ENCODE measurements at regions of chr9 and their contacts with region 1.

Region 1: DNA sequence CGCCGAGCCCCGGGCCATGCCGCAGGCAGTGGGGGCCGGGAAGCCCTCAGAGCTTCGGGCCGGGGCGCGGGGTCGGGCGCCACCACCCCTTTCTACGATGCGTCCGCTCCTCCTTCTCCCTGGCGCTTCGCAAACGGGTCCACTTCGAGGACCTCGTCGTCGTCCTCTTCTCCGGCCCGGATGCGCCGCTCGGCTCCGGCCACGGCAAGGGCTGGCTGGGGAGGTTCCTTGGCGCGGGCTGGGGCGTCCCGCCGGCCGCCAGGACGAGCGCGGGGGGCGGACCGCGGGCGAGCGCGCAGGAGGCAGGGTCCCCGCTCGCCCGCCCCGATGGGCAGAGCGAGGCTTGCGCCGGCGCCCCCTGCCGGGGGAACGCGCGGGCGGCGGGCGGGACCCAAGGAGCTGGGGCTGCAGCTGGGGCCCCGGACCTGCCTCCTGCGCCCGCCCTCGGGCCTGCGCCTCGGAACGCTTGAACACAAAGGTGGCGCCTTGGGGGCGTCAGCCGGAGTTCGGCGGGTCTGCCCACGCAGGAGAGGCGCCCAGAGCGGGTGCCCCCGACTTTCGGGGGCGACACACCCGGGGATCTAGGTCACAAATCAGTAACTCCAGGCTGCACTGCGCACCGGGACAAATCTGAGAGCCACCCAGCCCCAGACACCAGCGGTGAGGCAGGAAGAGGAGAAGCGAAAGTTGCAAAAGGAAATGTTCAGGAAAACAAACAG is at the start of gene ROR2:
- DNase-seq: peak; percentile 89
- H3K4me3 ChIP-seq: peak within 1 kb of the TSS; percentile 66 to 88 (median 76)
- H3K27ac ChIP-seq: peak within 1 kb of the TSS; percentile 88 to 95 (median 92)
- H3K4me1 ChIP-seq: peaks cover 0 to 44% (median 41%) of the 10 kb centered on the region in 4 donors
- H3K27me3 ChIP-seq: peaks cover 0 to 15% (median 0%) of the 10 kb centered on the region in 3 donors
- CTCF ChIP-seq: peak in 3 of 4 experiments; percentile 15 to 70 (median 36)
- EP300 ChIP-seq: no peak
- POLR2A ChIP-seq: peak; percentile 24 to 31
- total RNA-seq, gene ROR2: 51.4 to 81.7 (median 59.8) TPM

Region 2: DNA sequence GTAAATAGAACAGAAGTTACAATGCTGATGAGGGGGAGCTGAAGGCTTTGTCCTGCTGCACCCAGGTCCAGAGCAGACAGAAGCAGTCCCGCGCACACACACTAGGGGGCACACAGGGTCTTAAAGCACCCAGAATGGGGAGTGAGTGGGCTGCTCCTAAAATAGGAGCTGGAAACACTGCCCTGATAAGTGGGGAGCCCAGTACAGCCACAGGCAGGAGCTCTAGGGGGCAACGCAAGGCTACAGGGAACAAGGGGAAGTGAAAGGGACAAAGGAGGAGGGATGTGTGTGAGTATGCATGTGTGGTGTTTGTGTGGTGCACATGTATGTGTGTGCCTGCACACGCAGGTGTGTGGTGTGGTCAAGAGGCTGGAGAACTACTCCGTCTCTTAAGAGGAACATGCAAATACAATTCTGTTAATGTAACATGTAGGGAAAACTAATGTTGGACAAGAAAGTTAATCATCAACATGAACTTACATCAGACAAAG is 191.6 kb before region 1 on chr9:
- intact Hi-C with region 1: loop called (anchors 2 kb)
- DNase-seq: peak; percentile 83
- H3K4me3 ChIP-seq: no peak overlapping the region
- H3K27ac ChIP-seq: peak overlapping the region in 2 of 4 donors; percentile 5 to 27
- H3K4me1 ChIP-seq: peaks cover 0 to 15% (median 10%) of the 10 kb centered on the region in 4 donors
- H3K27me3 ChIP-seq: no peaks in the 10 kb centered on the region
- CTCF ChIP-seq: peak; percentile 41 to 65 (median 56)
- EP300 ChIP-seq: no peak
- POLR2A ChIP-seq: no peak

Region 3: GRCh38 chr9:91873637-91874051 is 76.5 kb before region 1 on chr9:
- intact Hi-C with region 1: loop called (anchors 2 kb)
- DNase-seq: peak; percentile 91
- H3K4me3 ChIP-seq: no peak overlapping the region
- H3K27ac ChIP-seq: peak overlapping the region; percentile 82 to 90 (median 86)
- H3K4me1 ChIP-seq: peaks cover 0 to 84% (median 72%) of the 10 kb centered on the region in 4 donors
- H3K27me3 ChIP-seq: no peaks in the 10 kb centered on the region
- CTCF ChIP-seq: no peak
- EP300 ChIP-seq: peak; percentile 98 to 99 (median 99)
- POLR2A ChIP-seq: no peak

Region 4: DNA sequence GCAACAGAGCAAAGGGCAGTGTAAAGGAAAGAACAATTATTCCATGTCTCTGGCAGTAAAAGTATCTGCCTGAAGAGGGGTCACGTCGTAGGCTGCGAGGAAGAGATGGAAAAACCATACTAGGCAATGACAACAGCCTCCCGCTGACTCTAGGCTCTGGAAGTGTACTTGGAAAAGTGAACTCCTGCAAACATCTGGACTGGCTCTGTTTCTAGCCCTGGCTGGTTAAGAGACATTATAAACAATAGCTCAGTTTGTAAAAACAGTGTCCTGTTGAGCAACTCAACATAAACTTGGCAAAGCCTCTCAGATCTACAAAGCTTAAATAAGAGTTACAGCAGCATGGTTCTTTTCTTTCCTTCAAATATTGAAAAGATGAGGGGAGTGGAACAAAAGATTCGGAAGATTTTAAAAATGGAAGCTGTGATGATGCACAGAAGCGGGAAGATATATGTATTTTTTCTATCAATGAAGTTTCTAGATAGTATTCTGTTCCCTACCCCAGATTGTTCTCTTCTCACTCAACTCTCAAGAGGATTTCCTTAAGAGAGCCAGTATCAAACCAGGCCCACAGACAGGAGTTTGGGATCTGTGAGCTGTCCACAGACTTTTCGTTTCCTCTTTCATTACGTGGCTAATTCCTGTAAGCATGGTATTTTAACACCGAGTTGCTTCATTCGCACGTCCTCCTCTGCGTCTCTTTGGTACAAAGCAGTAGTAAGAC is 85.7 kb after region 1 on chr9:
- intact Hi-C with region 1: loop called (anchors 1 kb)
- DNase-seq: peak; percentile 93
- H3K4me3 ChIP-seq: peak overlapping the region in 1 of 4 donors; percentile 13
- H3K27ac ChIP-seq: peak overlapping the region; percentile 63 to 86 (median 80)
- H3K4me1 ChIP-seq: peaks cover 0 to 51% (median 38%) of the 10 kb centered on the region in 4 donors
- H3K27me3 ChIP-seq: no peaks in the 10 kb centered on the region
- CTCF ChIP-seq: no peak
- EP300 ChIP-seq: peak; percentile 62 to 87 (median 67)
- POLR2A ChIP-seq: no peak

Region 5: DNA sequence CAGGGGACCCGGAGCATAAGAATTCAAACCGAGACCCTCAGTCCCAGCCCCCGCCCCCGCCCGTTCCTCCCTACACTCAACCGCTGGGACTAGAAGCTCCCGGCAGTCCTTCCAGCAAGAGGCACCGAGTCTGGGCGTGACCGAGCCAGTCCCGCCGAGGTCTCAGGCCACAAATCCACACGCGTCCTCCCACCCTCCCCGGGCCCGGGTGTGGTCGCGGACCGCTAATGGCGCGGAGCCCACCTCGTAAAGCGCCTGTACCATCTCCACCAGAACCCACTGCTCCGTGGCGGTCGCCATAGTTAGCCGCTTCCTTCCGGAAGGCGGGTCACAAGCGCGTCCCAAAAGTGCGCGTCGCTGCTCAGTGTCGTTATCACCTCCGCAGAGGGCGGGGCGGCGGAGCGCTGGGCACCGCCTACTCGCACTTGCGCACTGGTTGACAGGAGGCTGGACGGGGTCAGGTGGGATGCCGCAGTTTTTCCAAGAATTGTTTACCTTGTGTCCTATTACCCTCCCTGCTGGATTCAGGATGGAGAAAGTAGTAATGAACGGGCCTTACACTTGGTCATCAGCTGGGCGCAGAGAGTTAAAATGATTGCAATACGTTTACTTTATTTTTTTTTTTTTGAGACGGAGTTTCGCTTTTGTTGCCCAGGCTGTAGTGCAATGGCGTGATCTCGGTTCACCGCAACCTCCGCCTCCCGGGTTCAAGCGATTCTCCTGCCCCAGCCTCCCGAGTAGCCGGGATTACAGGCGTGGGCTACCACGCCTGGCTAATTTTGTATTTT is 165.2 kb after region 1 on chr9 and contains the start of gene SPTLC1:
- intact Hi-C with region 1: loop called (anchors 5 kb)
- DNase-seq: peak; percentile 98
- H3K4me3 ChIP-seq: peak within 1 kb of the TSS; percentile 79 to 95 (median 90)
- H3K27ac ChIP-seq: peak within 1 kb of the TSS; percentile 89 to 92 (median 90)
- H3K4me1 ChIP-seq: peaks cover 0 to 23% (median 17%) of the 10 kb centered on the region in 4 donors
- H3K27me3 ChIP-seq: no peaks in the 10 kb centered on the region
- CTCF ChIP-seq: no peak
- EP300 ChIP-seq: peak in 1 of 4 donors; percentile 85
- POLR2A ChIP-seq: peak; percentile 83 to 90
- total RNA-seq, gene SPTLC1: 55.0 to 75.4 (median 67.8) TPM

Measured in sigmoid colon (tissue), 7 donors.